Left cardiac atrium (tissue), 4 donors: ENCODE measurements at regions of chr9 and their contacts with region 1.

Region 1: DNA sequence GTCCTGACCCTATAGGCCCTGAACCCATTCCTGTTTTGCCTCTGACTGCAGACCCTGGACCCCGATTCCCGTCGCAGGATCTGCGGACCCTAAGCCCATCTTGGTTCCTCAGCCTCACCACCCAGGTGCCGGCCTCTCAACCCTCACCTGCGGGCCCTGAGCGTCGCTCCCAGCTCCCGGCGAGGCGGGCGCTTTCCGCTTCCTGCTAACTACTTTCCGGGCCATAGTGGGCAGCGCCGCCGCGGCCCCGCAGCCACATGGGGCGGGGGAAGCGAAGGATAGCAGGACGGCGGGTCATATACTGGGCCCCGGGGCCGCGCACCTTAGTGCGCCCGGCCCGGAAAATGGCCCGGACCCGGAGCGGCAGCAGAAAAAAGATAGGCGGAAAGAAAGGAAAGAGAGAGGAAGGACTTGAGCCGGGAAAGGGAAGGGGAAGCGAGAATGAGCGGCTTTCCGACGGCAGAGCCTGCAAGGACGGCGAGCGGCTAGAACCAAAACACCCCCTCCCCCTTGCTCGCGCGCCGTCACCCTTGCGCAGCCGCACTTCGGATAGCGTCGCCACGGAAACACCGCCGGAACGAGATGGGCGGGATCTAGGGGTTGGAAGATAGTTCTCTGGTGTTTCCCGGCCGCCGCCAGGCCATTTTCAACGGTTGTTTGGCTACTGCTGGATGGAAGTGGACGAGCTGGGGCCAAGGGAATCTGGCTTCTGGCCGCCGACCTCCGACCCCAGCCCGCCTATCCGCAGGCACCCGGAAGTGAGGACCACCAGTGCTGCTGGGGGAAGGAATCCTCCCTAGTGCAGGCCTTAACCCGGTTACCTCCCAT is at the start of gene DCAF12:
- DNase-seq: peak; percentile 93
- ATAC-seq: peak; percentile 98 to 99
- total RNA-seq, gene DCAF12: 16.1 to 20.2 TPM

Region 2: DNA sequence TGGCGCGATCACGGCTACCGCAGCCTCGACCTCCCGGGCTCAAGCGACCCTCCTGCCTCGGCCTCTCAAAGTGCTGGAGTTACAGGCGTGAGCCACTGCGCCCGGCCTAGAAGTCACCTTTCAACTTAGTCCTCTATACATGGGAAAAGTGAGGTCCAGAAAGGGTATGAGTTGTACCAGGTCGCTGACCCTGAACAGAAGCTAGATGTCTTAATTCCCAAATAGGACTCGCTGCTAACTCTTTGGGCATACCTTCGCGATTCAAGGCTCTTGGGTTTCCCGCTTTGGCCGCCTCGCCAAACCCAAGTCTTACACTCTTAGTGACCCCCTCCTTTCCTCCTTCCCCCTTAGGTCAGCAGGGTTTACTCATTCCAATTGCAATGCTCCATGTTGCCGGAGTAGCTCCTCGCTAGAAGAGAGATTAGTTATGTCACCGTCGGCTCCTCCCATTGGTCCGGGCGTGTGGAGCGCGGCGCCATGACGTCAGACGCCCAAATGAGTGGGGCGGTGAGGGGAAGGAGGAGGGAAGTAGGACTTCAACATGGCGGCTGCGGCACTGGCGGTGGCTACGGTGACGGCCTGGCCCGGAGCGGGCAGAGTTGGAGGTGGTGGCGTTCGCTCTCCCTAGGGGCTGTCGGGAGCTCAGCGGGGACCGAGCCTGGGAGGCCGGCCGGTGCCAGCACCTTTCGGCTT is 52.2 kb after region 1 on chr9 and contains the start of gene UBAP1:
- intact Hi-C with region 1: loop called in 1 of 2 experiments (anchors 5 kb)
- DNase-seq: peak; percentile 98
- ATAC-seq: peak; percentile 100
- total RNA-seq, gene UBAP1: 39.9 to 46.0 TPM